HCT116 (cell line): ENCODE measurements at regions of chr18 and their contacts with region 1.

Region 1: GRCh38 chr18:10560450-10561045 is 34.7 kb downstream of the NAPG start:
- DNase-seq: peak; percentile 36
- ATAC-seq: peak; percentile 83
- H3K4me3 ChIP-seq: no peak overlapping the region
- H3K27ac ChIP-seq: no peak overlapping the region
- H3K4me1 ChIP-seq: no peaks in the 10 kb centered on the region
- H3K27me3 ChIP-seq: no peaks in the 10 kb centered on the region
- CTCF ChIP-seq: peak; percentile 41 to 79 (median 72); a peak in 5 of 6 replicates
- POLR2A ChIP-seq: no peak
- RAD21 ChIP-seq: peak; percentile 61

Region 2: GRCh38 chr18:10713409-10713808 is 152.9 kb after region 1 on chr18:
- CTCF ChIA-PET with region 1: no interaction called
- POLR2A ChIA-PET with region 1: no interaction called
- RAD21 ChIA-PET with region 1: no interaction called
- intact Hi-C with region 1: loop called (anchors 5 kb)
- DNase-seq: no peak
- ATAC-seq: no peak
- H3K4me3 ChIP-seq: no peak overlapping the region
- H3K27ac ChIP-seq: no peak overlapping the region
- H3K4me1 ChIP-seq: no peaks in the 10 kb centered on the region
- H3K27me3 ChIP-seq: peaks cover 68% of the 10 kb centered on the region
- CTCF ChIP-seq: no peak
- POLR2A ChIP-seq: no peak
- RAD21 ChIP-seq: no peak

Region 3: DNA sequence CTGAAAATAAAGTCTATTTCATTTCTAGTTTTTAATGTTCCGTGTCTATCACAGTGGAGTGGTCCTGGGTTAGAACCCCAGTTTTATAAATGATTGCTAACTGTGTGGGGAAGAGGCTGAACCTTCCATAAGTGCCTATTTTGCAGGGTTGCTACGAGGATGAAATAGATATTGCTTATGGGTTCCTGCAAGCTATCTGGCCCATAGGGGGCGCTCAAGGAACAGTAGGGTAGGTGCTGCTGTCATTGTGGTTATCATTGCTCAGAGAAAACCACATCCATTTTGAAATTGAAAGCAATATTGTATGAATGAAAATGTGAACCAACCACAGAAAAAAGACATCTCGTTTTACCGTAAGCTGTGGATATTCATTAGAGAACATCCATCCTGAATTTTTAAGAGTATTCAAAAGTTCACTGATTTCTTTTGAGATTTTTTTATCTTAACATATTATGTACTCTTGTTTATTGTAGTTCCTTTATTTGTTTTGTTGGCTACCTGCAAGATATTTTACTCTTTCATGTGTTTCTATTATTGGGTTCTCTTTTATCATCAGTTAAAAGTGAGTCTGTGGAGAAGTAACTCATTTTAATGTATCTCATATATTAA is 226.8 kb after region 1 on chr18:
- CTCF ChIA-PET with region 1: interaction called, 4 read pairs
- POLR2A ChIA-PET with region 1: no interaction called
- RAD21 ChIA-PET with region 1: no interaction called
- intact Hi-C with region 1: loop called (anchors 5 kb)
- DNase-seq: peak; percentile 51
- ATAC-seq: peak; percentile 82
- H3K4me3 ChIP-seq: no peak overlapping the region
- H3K27ac ChIP-seq: no peak overlapping the region
- H3K4me1 ChIP-seq: no peaks in the 10 kb centered on the region
- H3K27me3 ChIP-seq: peaks cover 45% of the 10 kb centered on the region
- CTCF ChIP-seq: peak; percentile 25 to 92 (median 89); a peak in 5 of 6 replicates
- POLR2A ChIP-seq: no peak
- RAD21 ChIP-seq: peak; percentile 60

Region 4: GRCh38 chr18:11040823-11041656 is 480.5 kb after region 1 on chr18:
- CTCF ChIA-PET with region 1: no interaction called
- POLR2A ChIA-PET with region 1: no interaction called
- RAD21 ChIA-PET with region 1: no interaction called
- intact Hi-C with region 1: loop called (anchors 2 kb)
- DNase-seq: peak; percentile 22
- ATAC-seq: peak; percentile 55; the same call in 1 of the 2 replicates
- H3K4me3 ChIP-seq: no peak overlapping the region
- H3K27ac ChIP-seq: no peak overlapping the region
- H3K4me1 ChIP-seq: no peaks in the 10 kb centered on the region
- H3K27me3 ChIP-seq: peaks cover 15% of the 10 kb centered on the region
- CTCF ChIP-seq: peak; percentile 13 to 57 (median 57); a peak in 5 of 6 replicates
- POLR2A ChIP-seq: no peak
- RAD21 ChIP-seq: peak; percentile 40; the same call in 1 of the 2 replicates

Region 5: DNA sequence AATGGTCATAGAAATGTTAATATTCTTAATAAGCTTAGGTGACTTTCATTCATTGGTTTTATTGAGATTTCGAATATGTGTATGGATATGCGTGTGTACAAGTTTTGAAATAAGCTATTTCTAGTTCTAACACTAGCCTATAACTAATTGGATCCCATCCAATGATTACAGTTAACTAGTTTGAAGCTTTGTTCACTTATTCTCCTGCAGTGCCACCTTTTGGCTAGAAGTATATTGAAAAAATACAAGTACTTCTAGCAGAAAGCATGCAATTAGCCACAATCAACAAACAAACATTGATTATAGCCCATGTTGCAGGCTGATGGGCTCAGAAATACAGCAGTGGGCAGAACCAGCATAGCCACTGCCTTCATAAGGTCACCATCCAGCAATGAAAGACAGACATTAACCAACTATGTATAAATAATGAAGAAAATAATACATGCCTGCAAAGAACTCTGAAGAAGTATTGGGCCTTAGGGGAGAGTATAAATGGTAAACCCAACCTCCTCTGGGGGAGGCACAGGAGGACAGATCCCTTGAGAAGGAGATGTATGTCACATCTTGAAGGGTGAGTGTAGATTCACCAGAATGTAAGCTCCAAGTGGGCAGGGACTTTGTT is 593.9 kb after region 1 on chr18:
- CTCF ChIA-PET with region 1: interaction called, 34 read pairs
- POLR2A ChIA-PET with region 1: no interaction called
- RAD21 ChIA-PET with region 1: no interaction called
- intact Hi-C with region 1: loop called (anchors 1 kb)
- DNase-seq: peak; percentile 26
- ATAC-seq: no peak
- H3K4me3 ChIP-seq: no peak overlapping the region
- H3K27ac ChIP-seq: no peak overlapping the region
- H3K4me1 ChIP-seq: no peaks in the 10 kb centered on the region
- H3K27me3 ChIP-seq: 0 out of 2 replicates have a peak, but pooled peaks cover 22% of the 10 kb centered on the region
- CTCF ChIP-seq: peak; percentile 26 to 56 (median 29); a peak in 2 of 6 replicates
- POLR2A ChIP-seq: no peak
- RAD21 ChIP-seq: peak; percentile 57

Region 6: GRCh38 chr18:11553098-11553940 is 992.8 kb after region 1 on chr18:
- CTCF ChIA-PET with region 1: interaction called, 4 read pairs
- POLR2A ChIA-PET with region 1: no interaction called
- RAD21 ChIA-PET with region 1: no interaction called
- intact Hi-C with region 1: loop called (anchors 5 kb)
- DNase-seq: peak; percentile 45
- ATAC-seq: peak; percentile 91
- H3K4me3 ChIP-seq: no peak overlapping the region
- H3K27ac ChIP-seq: no peak overlapping the region
- H3K4me1 ChIP-seq: no peaks in the 10 kb centered on the region
- H3K27me3 ChIP-seq: peaks cover 51% of the 10 kb centered on the region
- CTCF ChIP-seq: peak; percentile 45 to 91 (median 88); a peak in 5 of 6 replicates
- POLR2A ChIP-seq: no peak
- RAD21 ChIP-seq: peak; percentile 68